ENCODE measurements at regions of chr6 and their contacts with region 1.

Region 1: GRCh38 chr6:65638047-65638842 is 68.8 kb downstream of the EYS start:
- DNase-seq: no peak
- ATAC-seq: peak; percentile 91
- H3K4me3 ChIP-seq: no peak overlapping the region
- H3K27ac ChIP-seq: no peak overlapping the region
- H3K4me1 ChIP-seq: no peaks in the 10 kb centered on the region
- H3K27me3 ChIP-seq: no peaks in the 10 kb centered on the region
- CTCF ChIP-seq: peak in 2 of 3 experiments; percentile 30 to 37; a peak in 2 of 6 replicates
- EP300 ChIP-seq: no peak
- POLR2A ChIP-seq: no peak
- RAD21 ChIP-seq: peak; percentile 21; the same call in 1 of the 2 replicates

Region 2: DNA sequence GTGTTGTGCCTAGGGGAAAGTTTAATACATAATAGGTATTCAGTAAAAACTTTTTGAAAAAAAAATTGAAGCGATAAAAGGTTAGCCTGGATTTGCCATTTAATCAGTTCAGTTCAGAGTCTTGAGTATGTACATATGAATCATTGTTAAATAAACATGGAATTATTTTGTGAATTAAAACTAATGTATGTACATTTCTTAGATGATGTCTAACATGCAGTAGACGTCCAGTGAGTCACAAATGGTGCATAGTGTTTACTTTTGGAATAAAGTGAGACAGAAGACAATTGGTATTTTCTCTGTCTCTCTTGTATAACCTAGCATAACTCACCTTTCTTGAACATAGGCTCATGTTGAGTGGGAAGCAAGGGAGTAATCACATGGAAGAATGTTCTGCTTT is 14.7 kb before region 1 on chr6:
- CTCF ChIA-PET with region 1: no interaction called
- POLR2A ChIA-PET with region 1: no interaction called
- RAD21 ChIA-PET with region 1: no interaction called
- SMC1A ChIA-PET with region 1: no interaction called
- in situ Hi-C with region 1: no loop called
- intact Hi-C with region 1: no loop called
- DNase-seq: no peak
- ATAC-seq: no peak
- H3K4me3 ChIP-seq: no peak overlapping the region
- H3K27ac ChIP-seq: no peak overlapping the region
- H3K4me1 ChIP-seq: no peaks in the 10 kb centered on the region
- H3K27me3 ChIP-seq: no peaks in the 10 kb centered on the region
- CTCF ChIP-seq: no peak
- EP300 ChIP-seq: no peak
- POLR2A ChIP-seq: no peak
- RAD21 ChIP-seq: no peak

Region 3: GRCh38 chr6:65719101-65719500 is 80.9 kb after region 1 on chr6:
- CTCF ChIA-PET with region 1: no interaction called
- POLR2A ChIA-PET with region 1: no interaction called
- RAD21 ChIA-PET with region 1: no interaction called
- SMC1A ChIA-PET with region 1: no interaction called
- in situ Hi-C with region 1: no loop called
- intact Hi-C with region 1: no loop called
- DNase-seq: no peak
- ATAC-seq: no peak
- H3K4me3 ChIP-seq: no peak overlapping the region
- H3K27ac ChIP-seq: no peak overlapping the region
- H3K4me1 ChIP-seq: no peaks in the 10 kb centered on the region
- H3K27me3 ChIP-seq: no peaks in the 10 kb centered on the region
- CTCF ChIP-seq: no peak
- EP300 ChIP-seq: no peak
- POLR2A ChIP-seq: no peak
- RAD21 ChIP-seq: no peak

Region 4: DNA sequence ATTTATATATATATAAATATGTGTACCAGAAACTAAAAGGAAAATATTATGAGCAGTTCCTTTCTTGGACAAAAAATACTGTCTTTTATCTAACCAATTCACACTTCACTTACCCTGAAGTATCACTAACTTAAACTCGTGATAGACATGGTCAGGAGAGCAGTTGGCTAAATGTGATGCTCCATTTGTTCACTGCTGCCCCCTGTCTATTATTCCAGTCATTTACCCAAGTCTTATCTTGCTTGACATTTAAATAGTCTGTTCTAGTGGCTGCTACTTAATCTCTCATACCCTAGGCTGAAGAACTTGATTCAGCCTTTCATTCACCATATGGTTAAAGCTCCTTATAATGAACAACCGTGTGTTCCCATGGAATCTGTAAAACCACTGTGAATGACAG is 858.4 kb after region 1 on chr6:
- CTCF ChIA-PET with region 1: interaction called, 14 read pairs
- POLR2A ChIA-PET with region 1: no interaction called
- RAD21 ChIA-PET with region 1: interaction called, 4 read pairs
- SMC1A ChIA-PET with region 1: interaction called, 15 read pairs
- in situ Hi-C with region 1: no loop called
- intact Hi-C with region 1: loop called (anchors 5 kb)
- DNase-seq: no peak
- ATAC-seq: peak; percentile 87
- H3K4me3 ChIP-seq: no peak overlapping the region
- H3K27ac ChIP-seq: no peak overlapping the region
- H3K4me1 ChIP-seq: no peaks in the 10 kb centered on the region
- H3K27me3 ChIP-seq: no peaks in the 10 kb centered on the region
- CTCF ChIP-seq: peak; percentile 26 to 47 (median 40); a peak in 4 of 6 replicates
- EP300 ChIP-seq: no peak
- POLR2A ChIP-seq: no peak
- RAD21 ChIP-seq: peak; percentile 34; the same call in 1 of the 2 replicates